Caco-2 (cell line): ENCODE measurements at regions of chr6 and their contacts with region 1.

Region 1: DNA sequence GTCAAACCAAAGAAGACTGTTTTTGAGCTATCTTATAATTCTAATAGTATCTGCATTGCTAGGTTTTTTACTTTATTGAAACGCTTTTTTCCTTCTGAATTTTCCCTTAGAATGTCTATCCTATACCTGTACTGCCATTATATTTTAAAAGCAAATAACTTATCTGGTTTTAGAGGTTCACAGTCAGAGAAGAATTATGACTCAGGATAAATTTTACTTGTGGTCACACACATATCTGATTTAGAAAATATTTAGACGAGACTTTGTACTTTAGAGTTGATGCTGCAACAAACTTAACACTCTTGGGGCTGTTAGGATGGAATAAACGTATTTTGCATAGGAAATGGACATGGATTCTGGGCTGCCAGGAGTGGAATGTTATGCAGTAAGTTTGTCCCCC is 33.0 kb downstream of the LMBRD1 start:
- DNase-seq: no peak
- H3K4me3 ChIP-seq: no peak overlapping the region
- H3K4me3 Mint-ChIP-seq: no peak overlapping the region
- H3K27ac Mint-ChIP-seq: no peak overlapping the region
- H3K4me1 ChIP-seq: no peaks in the 10 kb centered on the region
- H3K4me1 Mint-ChIP-seq: no peaks in the 10 kb centered on the region
- H3K27me3 ChIP-seq: no peaks in the 10 kb centered on the region
- H3K27me3 Mint-ChIP-seq: no peaks in the 10 kb centered on the region
- CTCF ChIP-seq: no peak

Region 2: GRCh38 chr6:69555088-69555638 is 208.6 kb before region 1 on chr6:
- CTCF ChIA-PET with region 1: no interaction called
- POLR2A ChIA-PET with region 1: no interaction called
- intact Hi-C with region 1: no loop called
- DNase-seq: no peak
- H3K4me3 ChIP-seq: no peak overlapping the region
- H3K4me3 Mint-ChIP-seq: no peak overlapping the region
- H3K27ac Mint-ChIP-seq: no peak overlapping the region
- H3K4me1 ChIP-seq: no peaks in the 10 kb centered on the region
- H3K4me1 Mint-ChIP-seq: no peaks in the 10 kb centered on the region
- H3K27me3 ChIP-seq: no peaks in the 10 kb centered on the region
- H3K27me3 Mint-ChIP-seq: no peaks in the 10 kb centered on the region
- CTCF ChIP-seq: no peak

Region 3: GRCh38 chr6:69812749-69813410 is 49.1 kb after region 1 on chr6:
- CTCF ChIA-PET with region 1: no interaction called
- POLR2A ChIA-PET with region 1: no interaction called
- intact Hi-C with region 1: loop called (anchors 1 kb)
- DNase-seq: no peak
- H3K4me3 ChIP-seq: no peak overlapping the region
- H3K4me3 Mint-ChIP-seq: peak overlapping the region; percentile 14
- H3K27ac Mint-ChIP-seq: peak overlapping the region; percentile 5
- H3K4me1 ChIP-seq: peaks cover 17% of the 10 kb centered on the region
- H3K4me1 Mint-ChIP-seq: peaks cover 22% of the 10 kb centered on the region
- H3K27me3 ChIP-seq: no peaks in the 10 kb centered on the region
- H3K27me3 Mint-ChIP-seq: peaks cover 8% of the 10 kb centered on the region
- CTCF ChIP-seq: no peak